ENCODE measurements at regions of chr16 and their contacts with region 1.

Region 1: GRCh38 chr16:81723098-81723723 is 55.9 kb upstream of the PLCG2 start:
- DNase-seq: peak; percentile 71
- CTCF ChIP-seq: peak; percentile 72

Region 2: DNA sequence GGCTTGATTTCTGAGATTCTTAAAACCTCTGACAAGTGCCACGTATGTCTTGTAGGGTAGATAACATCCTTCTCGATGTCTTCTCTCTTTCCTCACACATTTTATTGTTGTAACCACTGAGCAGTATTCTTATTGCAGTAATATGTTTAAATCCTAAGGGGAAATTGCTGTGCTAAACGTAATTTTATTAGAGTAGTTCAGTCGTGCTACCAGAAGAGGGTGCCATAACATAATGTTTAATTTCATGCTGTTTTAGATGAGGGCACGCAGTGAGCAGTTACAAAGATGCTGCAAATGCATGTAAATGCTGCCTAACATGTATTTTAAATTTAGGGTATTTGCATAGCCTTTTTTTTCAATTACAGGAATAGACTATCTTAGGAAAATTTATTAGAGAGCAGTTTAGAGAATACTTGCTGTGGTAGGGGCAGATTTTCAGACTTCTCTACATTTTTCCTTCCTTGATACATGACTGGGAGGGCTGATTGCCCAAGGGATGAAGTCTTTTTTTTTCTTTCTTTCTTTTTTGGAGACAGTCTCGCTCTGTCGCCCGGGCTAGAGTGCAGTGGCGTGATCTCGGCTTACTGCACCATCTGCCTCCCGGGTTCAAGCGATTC is 356.8 kb before region 1 on chr16:
- in situ Hi-C with region 1: loop called (anchors 10 kb)
- DNase-seq: peak; percentile 54
- CTCF ChIP-seq: peak; percentile 62

Region 3: DNA sequence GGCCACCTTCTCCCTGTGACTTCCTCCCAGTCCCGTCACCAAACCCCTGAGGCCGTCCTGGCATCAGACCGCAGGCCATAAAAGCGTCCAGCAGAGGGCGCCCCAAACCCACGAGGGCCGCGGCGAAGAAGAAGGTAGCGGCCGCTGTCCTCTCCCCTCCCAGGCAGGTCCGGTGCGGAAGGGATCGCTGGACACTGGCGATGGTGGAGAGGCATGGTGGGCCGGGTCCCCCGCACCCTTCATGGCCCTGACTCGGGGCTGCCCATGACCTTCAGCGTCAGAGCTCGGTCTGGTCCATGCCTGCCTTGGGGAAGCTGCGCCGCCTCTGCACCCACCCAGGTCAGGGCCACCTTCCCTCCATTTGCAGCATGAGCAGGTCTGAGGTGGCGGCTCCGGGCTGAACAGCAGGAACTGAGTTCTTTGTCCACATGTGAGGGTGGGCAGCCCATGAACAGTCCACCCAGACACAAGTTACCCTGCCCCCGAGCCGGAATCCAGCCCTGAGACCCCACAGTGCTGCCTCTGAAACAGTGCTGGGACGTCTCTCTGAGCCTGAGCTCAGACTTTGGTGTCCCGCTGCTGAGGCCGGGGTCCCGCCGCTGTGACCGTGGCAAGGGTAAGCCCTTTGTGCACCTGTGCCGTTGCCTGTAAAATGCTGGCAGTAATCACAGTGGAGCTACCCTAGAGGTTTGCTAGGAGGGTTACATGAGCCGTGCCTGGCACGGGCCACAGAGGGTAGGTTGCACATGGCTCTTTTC is 319.4 kb before region 1 on chr16:
- in situ Hi-C with region 1: loop called (anchors 10 kb)
- DNase-seq: peak; percentile 91
- CTCF ChIP-seq: peak; percentile 98

Region 4: DNA sequence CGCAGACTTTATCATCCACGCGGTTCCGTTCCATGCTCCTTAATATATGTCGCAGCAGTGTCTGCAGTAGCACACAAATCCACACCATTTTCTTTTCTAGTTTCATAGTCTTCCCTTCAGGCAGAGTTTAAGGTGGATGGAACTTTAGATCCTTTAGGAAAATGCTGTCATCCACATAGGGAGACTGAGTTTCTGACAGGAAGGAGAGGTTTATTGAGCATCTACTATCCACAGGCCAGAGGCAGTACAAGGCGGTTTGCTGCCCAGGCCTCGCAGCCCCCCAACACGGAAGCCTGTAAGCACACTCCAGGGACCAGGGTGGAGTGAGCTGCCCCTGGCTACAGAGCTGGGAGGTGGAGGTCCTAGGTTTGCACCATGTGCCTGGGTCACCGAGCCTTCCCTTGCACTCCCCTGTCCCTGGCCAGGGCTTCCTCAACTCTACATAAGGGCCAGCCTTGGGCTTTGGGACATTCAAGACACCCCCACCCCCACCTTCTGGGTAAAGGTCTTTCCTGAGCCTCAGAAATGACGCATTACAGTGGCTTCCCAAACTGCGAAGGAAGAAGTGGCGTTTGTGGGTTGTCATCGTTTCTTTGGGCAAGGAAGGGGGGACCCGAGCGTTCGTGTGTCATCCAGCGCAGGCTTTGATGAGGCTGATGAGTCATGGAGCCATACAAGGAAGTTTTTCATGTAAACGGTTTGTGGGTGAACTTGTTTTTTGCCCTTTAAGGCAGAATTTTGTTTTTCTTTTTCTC is 90.6 kb before region 1 on chr16:
- in situ Hi-C with region 1: loop called (anchors 10 kb)
- DNase-seq: no peak
- CTCF ChIP-seq: no peak